ENCODE measurements at regions of chr19 and their contacts with region 1.

Region 1: DNA sequence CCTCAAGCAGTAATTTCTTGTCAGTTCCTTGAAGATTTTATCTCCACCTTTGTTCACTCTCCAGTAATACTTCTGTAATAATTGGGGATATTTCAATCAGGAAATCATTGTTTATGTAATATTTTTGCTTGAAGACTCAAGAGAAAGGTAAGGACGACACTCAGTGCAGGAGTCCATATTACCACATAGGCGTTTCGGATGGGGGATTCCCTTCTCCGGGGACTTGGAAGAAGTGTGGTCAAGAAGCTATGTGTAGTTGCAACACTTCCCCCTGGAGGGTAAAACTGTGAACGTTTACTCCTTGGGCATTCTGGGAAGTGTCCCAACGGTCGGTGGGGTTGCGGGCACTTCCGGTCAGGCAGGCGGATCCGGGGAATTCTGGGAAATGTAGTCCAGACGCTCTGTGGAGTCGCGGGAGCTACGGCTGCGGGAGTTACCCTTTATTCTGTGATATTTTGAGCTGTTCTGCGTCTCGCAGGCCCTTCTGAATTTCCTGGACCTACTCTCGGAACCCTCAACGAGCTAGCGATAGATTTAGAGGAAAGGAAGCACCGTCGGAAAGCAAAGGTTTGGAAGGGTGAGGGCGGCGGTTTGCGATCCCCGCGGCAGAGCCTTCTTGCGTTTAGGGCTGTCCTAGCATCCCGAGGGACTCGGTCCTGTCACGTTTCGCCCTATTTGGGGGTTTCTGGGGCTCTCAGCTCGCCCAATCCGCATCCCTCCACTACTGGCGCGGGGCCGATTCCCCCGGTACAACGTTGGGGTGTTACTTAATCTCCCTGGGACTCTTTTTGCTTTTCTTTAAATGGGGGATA is at the start of gene ZNF221:
- DNase-seq: peak; percentile 88 to 92 (median 89)
- ATAC-seq: peak; percentile 99
- H3K4me3 ChIP-seq: peak within 1 kb of the TSS; percentile 59
- H3K27ac ChIP-seq: peak within 1 kb of the TSS; percentile 59
- H3K4me1 ChIP-seq: 0 out of 5 replicates have a peak, but pooled peaks cover 0 to 5% of the 10 kb centered on the region in 2 experiments
- H3K27me3 ChIP-seq: no peaks in the 10 kb centered on the region
- CTCF ChIP-seq: peak; percentile 31 to 51 (median 44); a peak in 4 of 6 replicates
- EP300 ChIP-seq: peak; percentile 84
- POLR2A ChIP-seq: peak; percentile 43; the same call in 1 of the 2 replicates
- RAD21 ChIP-seq: peak in 1 of 2 experiments; percentile 39; a peak in 2 of 4 replicates
- polyA plus RNA-seq, gene ZNF221: 0.45 to 0.52 TPM

Region 2: GRCh38 chr19:43503501-43504425 is 447.3 kb before region 1 on chr19:
- CTCF ChIA-PET with region 1: no interaction called
- POLR2A ChIA-PET with region 1: no interaction called
- in situ Hi-C with region 1: no loop called
- intact Hi-C with region 1: no loop called
- DNase-seq: peak; percentile 97 to 99 (median 98)
- ATAC-seq: peak; percentile 97
- H3K4me3 ChIP-seq: peak overlapping the region; percentile 70
- H3K27ac ChIP-seq: peak overlapping the region; percentile 65
- H3K4me1 ChIP-seq: peaks cover 21 to 33% of the 10 kb centered on the region in 2 experiments
- H3K27me3 ChIP-seq: no peaks in the 10 kb centered on the region
- CTCF ChIP-seq: peak in 2 of 3 experiments; percentile 26 to 52; a peak in 2 of 6 replicates
- EP300 ChIP-seq: no peak
- POLR2A ChIP-seq: peak; percentile 72
- RAD21 ChIP-seq: no peak

Region 3: GRCh38 chr19:43934985-43935708 is 15.9 kb before region 1 on chr19 and contains the start of gene ZNF45:
- CTCF ChIA-PET with region 1: no interaction called
- POLR2A ChIA-PET with region 1: interaction called, 16 read pairs
- in situ Hi-C with region 1: no loop called
- intact Hi-C with region 1: loop called (anchors 2 kb)
- DNase-seq: peak; percentile 90 to 94 (median 90)
- ATAC-seq: peak; percentile 98
- H3K4me3 ChIP-seq: peak within 1 kb of the TSS; percentile 79
- H3K27ac ChIP-seq: peak within 1 kb of the TSS; percentile 82
- H3K4me1 ChIP-seq: peaks cover 0 to 3% of the 10 kb centered on the region in 2 experiments; a peak in 2 of 5 replicates
- H3K27me3 ChIP-seq: no peaks in the 10 kb centered on the region
- CTCF ChIP-seq: no peak
- EP300 ChIP-seq: no peak
- POLR2A ChIP-seq: peak; percentile 83
- RAD21 ChIP-seq: no peak; a peak in 1 of 4 replicates
- polyA plus RNA-seq, gene ZNF45: 2.6 to 5.1 TPM

Measured in K562 (cell line).